IMR-90 (cell line): ENCODE measurements at regions of chr20 and their contacts with region 1.

Region 1: DNA sequence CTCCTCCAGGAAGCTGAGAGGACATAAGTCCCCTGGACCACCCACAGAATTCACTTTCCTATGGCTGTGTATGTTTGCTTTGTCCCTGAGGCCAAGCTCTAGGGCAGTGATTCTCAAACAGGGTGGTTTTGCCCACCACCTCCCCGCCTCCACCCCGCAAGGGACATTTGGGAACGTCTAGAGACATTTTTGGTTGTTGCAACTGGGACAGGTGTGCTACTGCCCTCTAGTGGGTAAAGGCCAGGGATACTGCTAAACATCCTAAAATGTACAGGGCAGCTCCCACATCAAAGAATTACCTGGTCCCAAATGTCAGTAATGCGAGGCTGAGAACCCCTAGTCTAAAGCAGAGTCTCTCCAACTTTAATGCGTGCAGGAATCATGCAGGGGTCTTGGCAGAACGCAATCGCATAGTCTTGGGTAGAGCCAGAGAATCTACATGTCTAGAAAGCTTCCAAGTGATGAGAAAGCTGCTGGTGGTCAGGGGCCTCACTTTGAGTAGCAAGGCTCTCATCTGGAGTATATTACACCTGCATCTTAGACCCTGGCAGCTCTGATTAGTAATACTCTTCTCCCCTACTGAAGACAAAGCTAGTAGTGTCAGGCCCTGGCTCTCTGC is 5.1 kb downstream of the KCNS1 start:
- DNase-seq: peak; percentile 69
- ATAC-seq: peak; percentile 84
- H3K4me3 ChIP-seq: no peak overlapping the region
- H3K27ac ChIP-seq: no peak overlapping the region
- H3K4me1 ChIP-seq: peaks cover 4% of the 10 kb centered on the region; the same call in 1 of the 2 replicates
- H3K27me3 ChIP-seq: peaks cover 37% of the 10 kb centered on the region
- CTCF ChIP-seq: peak; percentile 79
- POLR2A ChIP-seq: no peak
- RAD21 ChIP-seq: peak; percentile 79

Region 2: GRCh38 chr20:43430265-43431133 is 1665.4 kb before region 1 on chr20:
- CTCF ChIA-PET with region 1: no interaction called
- POLR2A ChIA-PET with region 1: no interaction called
- dilution Hi-C with region 1: no loop called
- in situ Hi-C with region 1: no loop called
- intact Hi-C with region 1: no loop called
- DNase-seq: no peak
- ATAC-seq: no peak
- H3K4me3 ChIP-seq: no peak overlapping the region
- H3K27ac ChIP-seq: no peak overlapping the region
- H3K4me1 ChIP-seq: no peaks in the 10 kb centered on the region
- H3K27me3 ChIP-seq: peaks cover 2% of the 10 kb centered on the region
- CTCF ChIP-seq: no peak
- POLR2A ChIP-seq: no peak
- RAD21 ChIP-seq: no peak

Region 3: DNA sequence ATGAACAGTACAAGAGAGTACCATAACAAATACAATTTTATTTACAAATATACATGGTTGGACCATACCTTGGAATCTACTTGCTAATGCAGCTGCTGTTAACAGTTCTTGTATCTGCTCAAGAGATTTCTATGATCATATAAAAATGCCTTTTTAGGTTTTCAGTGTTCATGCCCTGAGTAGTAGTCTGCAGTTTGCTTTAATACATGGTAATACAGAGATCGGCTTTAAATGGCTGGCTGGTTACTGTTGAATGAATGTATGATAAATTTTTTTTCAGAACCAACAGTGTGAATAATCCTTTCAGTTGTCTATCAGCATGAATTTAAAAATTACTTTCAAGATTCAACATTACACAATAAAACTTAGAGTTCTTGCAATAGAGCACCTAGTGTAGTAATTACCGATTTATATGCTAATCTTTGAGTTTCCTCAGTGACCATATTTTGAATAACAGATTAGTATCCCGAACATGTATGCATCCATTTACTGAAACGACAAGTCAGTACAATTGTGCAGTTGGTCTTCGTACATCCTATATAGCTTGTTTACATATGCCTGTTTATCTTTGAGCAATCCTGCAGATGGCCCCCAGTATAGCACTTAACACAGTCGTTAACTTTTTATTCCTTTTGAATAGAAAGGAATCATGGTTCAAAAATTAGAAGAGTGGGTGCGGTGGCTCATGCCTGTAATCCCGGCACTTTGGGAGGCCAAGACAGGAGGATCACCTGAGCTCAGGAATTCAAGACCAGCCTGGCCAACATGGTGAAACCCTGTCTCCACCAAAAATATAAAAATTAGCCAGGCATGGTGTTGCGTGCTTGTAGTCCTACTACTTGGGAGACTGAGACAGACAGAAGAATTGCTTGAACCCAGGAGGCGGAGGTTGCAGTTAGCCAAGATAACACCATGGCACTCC is 1631.7 kb before region 1 on chr20:
- CTCF ChIA-PET with region 1: no interaction called
- POLR2A ChIA-PET with region 1: interaction called, 10 read pairs
- dilution Hi-C with region 1: no loop called
- in situ Hi-C with region 1: no loop called
- intact Hi-C with region 1: no loop called
- DNase-seq: no peak
- ATAC-seq: no peak
- H3K4me3 ChIP-seq: no peak overlapping the region
- H3K27ac ChIP-seq: no peak overlapping the region
- H3K4me1 ChIP-seq: peaks cover under 1% of the 10 kb centered on the region; the same call in 1 of the 2 replicates
- H3K27me3 ChIP-seq: no peaks in the 10 kb centered on the region
- CTCF ChIP-seq: no peak
- POLR2A ChIP-seq: peak; percentile 49
- RAD21 ChIP-seq: no peak

Region 4: DNA sequence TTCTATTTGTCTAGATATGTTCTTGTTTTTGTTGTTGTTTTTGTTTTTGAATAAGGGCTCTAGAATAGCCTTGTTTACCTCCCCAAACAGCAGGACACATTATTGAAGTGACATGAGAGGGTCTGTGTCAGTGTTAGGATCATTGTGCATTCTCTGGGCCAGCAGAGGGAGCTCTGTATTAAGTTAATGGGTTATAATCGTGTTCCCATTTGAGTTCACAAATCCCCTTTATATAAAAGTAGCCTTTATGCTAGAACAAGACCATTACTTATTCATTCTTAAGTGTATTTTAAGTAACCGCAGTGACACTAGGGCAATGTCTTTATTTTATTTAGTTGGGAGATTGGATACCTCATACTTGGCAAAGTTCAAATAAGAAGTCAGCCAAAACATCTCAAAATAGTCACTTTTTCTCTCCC is 84.7 kb before region 1 on chr20:
- CTCF ChIA-PET with region 1: interaction called, 18 read pairs
- POLR2A ChIA-PET with region 1: no interaction called
- dilution Hi-C with region 1: no loop called
- in situ Hi-C with region 1: no loop called
- intact Hi-C with region 1: loop called (anchors 1 kb)
- DNase-seq: peak; percentile 80
- ATAC-seq: peak; percentile 74
- H3K4me3 ChIP-seq: no peak overlapping the region
- H3K27ac ChIP-seq: no peak overlapping the region
- H3K4me1 ChIP-seq: peaks cover 15% of the 10 kb centered on the region
- H3K27me3 ChIP-seq: no peaks in the 10 kb centered on the region
- CTCF ChIP-seq: peak; percentile 75
- POLR2A ChIP-seq: no peak
- RAD21 ChIP-seq: peak; percentile 81

Region 5: DNA sequence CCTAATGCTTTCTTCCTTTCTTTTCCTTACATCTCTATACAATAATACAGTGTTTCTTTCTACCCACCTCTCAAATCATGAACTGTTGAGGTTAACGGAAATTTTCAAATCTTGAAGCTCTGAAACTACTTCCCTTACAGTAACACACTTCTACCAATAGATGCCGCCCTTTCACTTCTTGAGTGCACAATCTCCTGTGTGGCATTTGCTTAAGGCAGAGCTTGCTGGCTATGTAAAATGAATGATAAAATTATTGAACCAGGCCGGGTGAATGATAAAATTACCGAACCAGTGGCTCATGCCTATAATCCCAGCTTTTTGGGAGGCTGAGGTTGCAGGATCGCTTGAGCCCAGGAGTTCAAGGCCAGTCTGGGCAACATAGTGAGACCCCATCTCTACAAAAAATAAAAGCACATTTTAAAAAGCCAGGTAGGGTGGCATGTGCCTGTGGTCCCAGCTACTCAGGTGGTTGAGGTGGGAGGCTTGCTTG is 51.7 kb before region 1 on chr20:
- CTCF ChIA-PET with region 1: interaction called, 40 read pairs
- POLR2A ChIA-PET with region 1: no interaction called
- dilution Hi-C with region 1: no loop called
- in situ Hi-C with region 1: no loop called
- intact Hi-C with region 1: loop called (anchors 1 kb)
- DNase-seq: peak; percentile 86
- ATAC-seq: peak; percentile 94
- H3K4me3 ChIP-seq: no peak overlapping the region
- H3K27ac ChIP-seq: no peak overlapping the region
- H3K4me1 ChIP-seq: peaks cover 10% of the 10 kb centered on the region
- H3K27me3 ChIP-seq: no peaks in the 10 kb centered on the region
- CTCF ChIP-seq: peak; percentile 94
- POLR2A ChIP-seq: no peak
- RAD21 ChIP-seq: peak; percentile 92

Region 6: GRCh38 chr20:45293041-45294002 is 197.5 kb after region 1 on chr20:
- CTCF ChIA-PET with region 1: no interaction called
- POLR2A ChIA-PET with region 1: no interaction called
- dilution Hi-C with region 1: no loop called
- in situ Hi-C with region 1: loop called (anchors 25 kb)
- intact Hi-C with region 1: loop called (anchors 2 kb)
- DNase-seq: peak; percentile 46
- ATAC-seq: peak; percentile 93
- H3K4me3 ChIP-seq: peak overlapping the region; percentile 37
- H3K27ac ChIP-seq: no peak overlapping the region; the same call in 1 of the 2 replicates
- H3K4me1 ChIP-seq: no peaks in the 10 kb centered on the region
- H3K27me3 ChIP-seq: peaks cover 17% of the 10 kb centered on the region
- CTCF ChIP-seq: peak; percentile 83
- POLR2A ChIP-seq: no peak
- RAD21 ChIP-seq: no peak; the same call in 1 of the 2 replicates